ENCODE measurements at regions of chr9 and their contacts with region 1.

Region 1: GRCh38 chr9:19720377-19720776 is 68.5 kb downstream of the SLC24A2 start:
- DNase-seq: no peak
- H3K4me3 ChIP-seq: no peak overlapping the region
- H3K27ac ChIP-seq: peak overlapping the region in 1 of 59 donors; percentile 45
- H3K27me3 ChIP-seq: no peaks in the 10 kb centered on the region
- CTCF ChIP-seq: no peak

Region 2: DNA sequence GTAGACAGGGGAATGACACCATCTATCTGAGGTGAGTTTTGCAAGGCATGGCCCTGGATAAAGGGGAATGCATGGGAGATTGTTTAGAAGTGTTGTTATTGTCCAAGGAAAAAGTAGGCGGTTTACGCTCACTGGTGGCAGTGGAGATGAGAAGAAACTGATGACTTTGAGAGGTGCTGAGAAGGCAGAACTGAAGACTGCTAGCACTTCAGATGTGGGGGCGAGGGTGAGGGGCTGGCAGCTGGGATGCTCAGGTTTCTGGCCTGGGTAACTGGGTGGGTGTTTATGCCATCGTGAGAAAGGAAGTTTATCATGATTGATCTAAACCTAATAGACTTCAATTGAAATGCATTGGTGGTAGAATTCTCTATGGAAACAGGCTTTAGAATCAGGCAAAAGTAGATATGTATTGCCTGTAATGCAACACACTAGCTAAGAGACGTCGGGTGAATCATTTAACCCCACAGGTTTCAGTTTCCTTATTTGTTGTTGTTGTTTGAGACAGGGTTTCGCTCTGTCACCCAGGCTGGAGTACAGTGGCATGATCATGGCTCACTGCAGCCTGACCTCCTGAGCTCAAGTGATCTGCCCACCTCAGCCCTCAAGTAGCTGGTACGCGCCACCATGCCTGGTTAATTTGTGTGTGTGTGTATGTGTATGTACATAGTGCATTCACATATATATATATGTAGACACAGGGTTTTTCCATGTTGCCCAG is 55.1 kb before region 1 on chr9:
- intact Hi-C with region 1: loop called in 1 of 2 experiments (anchors 10 kb)
- DNase-seq: no peak
- H3K4me3 ChIP-seq: no peak overlapping the region
- H3K27ac ChIP-seq: peak overlapping the region in 50 of 59 donors; percentile 7 to 92 (median 66)
- H3K27me3 ChIP-seq: no peaks in the 10 kb centered on the region
- CTCF ChIP-seq: no peak